CD4-positive, alpha-beta memory T cell (primary cell): ENCODE measurements at regions of chr14 and their contacts with region 1.

Region 1: GRCh38 chr14:101707068-101707842 is 54.3 kb upstream of the PPP2R5C start:
- DNase-seq: peak; percentile 70 to 83 (median 82)
- H3K4me3 ChIP-seq: peak overlapping the region; percentile 21 to 52
- H3K4me3 Mint-ChIP-seq: peak overlapping the region; percentile 34 to 79 (median 74)
- H3K27ac ChIP-seq: peak overlapping the region; percentile 57
- H3K27ac Mint-ChIP-seq: peak overlapping the region; percentile 59 to 94 (median 90)
- H3K4me1 ChIP-seq: peaks cover 52% of the 10 kb centered on the region
- H3K4me1 Mint-ChIP-seq: peaks cover 23 to 54% (median 41%) of the 10 kb centered on the region in 4 donors
- H3K27me3 ChIP-seq: no peaks in the 10 kb centered on the region
- H3K27me3 Mint-ChIP-seq: no peaks in the 10 kb centered on the region

Region 2: GRCh38 chr14:101731187-101732080 is 24.2 kb after region 1 on chr14:
- CTCF ChIA-PET with region 1: interaction called, 23 read pairs
- POLR2A ChIA-PET with region 1: interaction called, 59 read pairs
- intact Hi-C with region 1: loop called (anchors 1 kb)
- DNase-seq: peak; percentile 83 to 96 (median 83)
- H3K4me3 ChIP-seq: peak overlapping the region; percentile 31 to 58
- H3K4me3 Mint-ChIP-seq: peak overlapping the region; percentile 68 to 86 (median 82)
- H3K27ac ChIP-seq: peak overlapping the region; percentile 75
- H3K27ac Mint-ChIP-seq: peak overlapping the region; percentile 85 to 100 (median 99)
- H3K4me1 ChIP-seq: peaks cover 35% of the 10 kb centered on the region
- H3K4me1 Mint-ChIP-seq: peaks cover 29 to 52% (median 42%) of the 10 kb centered on the region in 4 donors
- H3K27me3 ChIP-seq: no peaks in the 10 kb centered on the region
- H3K27me3 Mint-ChIP-seq: no peaks in the 10 kb centered on the region

Region 3: GRCh38 chr14:101767618-101768362 is 60.5 kb after region 1 on chr14:
- CTCF ChIA-PET with region 1: interaction called, 110 read pairs
- POLR2A ChIA-PET with region 1: interaction called, 68 read pairs
- intact Hi-C with region 1: loop called (anchors 1 kb)
- DNase-seq: no peak
- H3K4me3 ChIP-seq: no peak overlapping the region
- H3K4me3 Mint-ChIP-seq: no peak overlapping the region
- H3K27ac ChIP-seq: no peak overlapping the region
- H3K27ac Mint-ChIP-seq: no peak overlapping the region
- H3K4me1 ChIP-seq: peaks cover 45% of the 10 kb centered on the region
- H3K4me1 Mint-ChIP-seq: peaks cover 29 to 37% (median 34%) of the 10 kb centered on the region in 4 donors
- H3K27me3 ChIP-seq: no peaks in the 10 kb centered on the region
- H3K27me3 Mint-ChIP-seq: no peaks in the 10 kb centered on the region

Region 4: DNA sequence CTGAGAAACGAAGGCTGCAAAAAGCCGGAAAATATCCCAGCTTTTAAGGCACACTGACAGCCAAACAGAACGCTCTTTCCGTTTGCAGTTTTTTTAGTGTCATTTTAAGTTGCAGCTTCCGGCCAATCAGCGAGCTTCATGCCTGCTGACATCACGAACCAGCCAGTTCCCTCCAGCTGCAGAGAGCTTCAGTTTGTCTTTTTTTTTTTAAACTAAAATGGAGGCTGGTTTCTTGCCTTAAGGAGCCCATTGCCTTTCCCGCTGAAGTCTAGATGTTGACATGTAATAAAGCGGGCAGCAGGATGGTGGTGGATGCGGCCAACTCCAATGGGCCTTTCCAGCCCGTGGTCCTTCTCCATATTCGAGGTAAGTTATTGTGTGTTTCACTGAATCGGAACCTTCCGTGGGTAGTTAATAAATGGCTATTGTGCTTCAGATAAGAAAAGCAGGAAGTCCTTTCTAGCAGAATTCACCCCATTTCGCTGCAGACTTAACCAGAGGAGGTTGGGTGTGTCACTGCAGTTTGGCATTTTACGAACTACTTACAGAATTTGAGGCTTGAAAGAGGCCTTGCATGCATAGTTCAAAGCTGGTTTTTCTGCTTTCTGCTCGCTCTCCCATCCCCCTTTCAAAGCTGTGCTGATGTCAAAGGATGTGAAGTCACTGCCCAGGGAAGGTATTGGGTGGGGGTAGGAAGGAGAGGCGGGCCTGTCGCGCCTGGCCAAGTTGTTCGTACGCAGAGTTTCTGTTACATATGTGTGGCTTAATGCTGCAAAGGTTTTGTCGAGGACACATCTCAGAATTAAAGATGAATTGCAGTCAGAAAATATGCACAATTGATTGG is 102.6 kb after region 1 on chr14:
- CTCF ChIA-PET with region 1: interaction called, 28 read pairs
- POLR2A ChIA-PET with region 1: interaction called, 30 read pairs
- intact Hi-C with region 1: loop called (anchors 5 kb)
- DNase-seq: peak; percentile 91 to 97 (median 95)
- H3K4me3 ChIP-seq: peak overlapping the region; percentile 85 to 97
- H3K4me3 Mint-ChIP-seq: peak overlapping the region; percentile 90 to 97 (median 95)
- H3K27ac ChIP-seq: peak overlapping the region; percentile 98
- H3K27ac Mint-ChIP-seq: peak overlapping the region; percentile 97 to 100 (median 99)
- H3K4me1 ChIP-seq: peaks cover 46% of the 10 kb centered on the region
- H3K4me1 Mint-ChIP-seq: peaks cover 31 to 62% (median 46%) of the 10 kb centered on the region in 4 donors
- H3K27me3 ChIP-seq: no peaks in the 10 kb centered on the region
- H3K27me3 Mint-ChIP-seq: no peaks in the 10 kb centered on the region

Region 5: GRCh38 chr14:101843665-101844064 is 136.4 kb after region 1 on chr14:
- CTCF ChIA-PET with region 1: interaction called, 46 read pairs
- POLR2A ChIA-PET with region 1: interaction called, 20 read pairs
- intact Hi-C with region 1: loop called (anchors 1 kb)
- DNase-seq: peak; percentile 65 to 83 (median 67)
- H3K4me3 ChIP-seq: no peak overlapping the region
- H3K4me3 Mint-ChIP-seq: peak overlapping the region in 7 of 8 donors; percentile 23 to 81 (median 50)
- H3K27ac ChIP-seq: peak overlapping the region; percentile 7
- H3K27ac Mint-ChIP-seq: peak overlapping the region; percentile 76 to 95 (median 92)
- H3K4me1 ChIP-seq: peaks cover 96% of the 10 kb centered on the region
- H3K4me1 Mint-ChIP-seq: peaks cover 72 to 98% (median 86%) of the 10 kb centered on the region in 4 donors
- H3K27me3 ChIP-seq: no peaks in the 10 kb centered on the region
- H3K27me3 Mint-ChIP-seq: no peaks in the 10 kb centered on the region

Region 6: DNA sequence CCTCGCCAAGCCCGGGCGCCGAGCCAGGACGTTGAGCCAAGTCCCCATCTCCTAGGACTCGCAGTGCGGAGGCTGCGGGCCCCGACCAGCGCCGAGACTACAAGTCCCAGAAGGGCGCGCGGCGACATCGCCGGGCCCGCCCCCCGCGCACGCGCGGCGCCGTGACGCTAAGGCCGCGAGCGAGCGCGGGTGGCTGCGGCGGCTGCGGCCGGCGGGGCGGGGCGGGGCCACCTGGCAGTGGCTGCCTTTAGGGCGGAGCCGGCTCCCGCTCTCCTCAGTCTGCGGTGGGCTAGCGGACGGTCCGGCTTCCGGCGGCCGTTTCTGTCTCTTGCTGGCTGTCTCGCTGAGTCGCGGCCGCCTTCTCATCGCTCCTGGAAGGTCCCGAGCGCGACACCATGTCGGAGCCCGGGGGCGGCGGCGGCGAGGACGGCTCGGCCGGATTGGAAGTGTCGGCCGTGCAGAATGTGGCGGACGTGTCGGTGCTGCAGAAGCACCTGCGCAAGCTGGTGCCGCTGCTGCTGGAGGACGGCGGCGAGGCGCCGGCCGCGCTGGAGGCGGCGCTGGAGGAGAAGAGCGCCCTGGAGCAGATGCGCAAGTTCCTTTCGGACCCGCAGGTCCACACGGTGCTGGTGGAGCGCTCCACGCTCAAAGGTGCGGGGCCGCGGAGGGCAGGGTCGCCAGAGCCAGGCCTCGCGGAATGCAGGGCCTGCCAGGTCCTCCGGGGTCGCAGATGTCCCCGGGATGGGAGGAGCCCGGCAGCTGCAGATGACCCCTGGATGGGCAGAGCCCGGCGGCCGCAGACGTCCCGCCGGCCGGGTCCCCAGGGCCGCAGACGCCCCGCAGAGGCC is 257.3 kb after region 1 on chr14 and contains the start of gene DYNC1H1:
- CTCF ChIA-PET with region 1: interaction called, 21 read pairs
- POLR2A ChIA-PET with region 1: interaction called, 8 read pairs
- intact Hi-C with region 1: loop called (anchors 1 kb)
- DNase-seq: peak; percentile 85 to 92 (median 89)
- H3K4me3 ChIP-seq: peak within 1 kb of the TSS; percentile 45 to 82
- H3K4me3 Mint-ChIP-seq: peak within 1 kb of the TSS; percentile 89 to 92 (median 91)
- H3K27ac ChIP-seq: peak within 1 kb of the TSS; percentile 79
- H3K27ac Mint-ChIP-seq: peak within 1 kb of the TSS; percentile 92 to 96 (median 93)
- H3K4me1 ChIP-seq: peaks cover 46% of the 10 kb centered on the region
- H3K4me1 Mint-ChIP-seq: peaks cover 27 to 61% (median 43%) of the 10 kb centered on the region in 4 donors
- H3K27me3 ChIP-seq: no peaks in the 10 kb centered on the region
- H3K27me3 Mint-ChIP-seq: no peaks in the 10 kb centered on the region
- total RNA-seq, gene DYNC1H1: 314 to 318 TPM

Region 7: DNA sequence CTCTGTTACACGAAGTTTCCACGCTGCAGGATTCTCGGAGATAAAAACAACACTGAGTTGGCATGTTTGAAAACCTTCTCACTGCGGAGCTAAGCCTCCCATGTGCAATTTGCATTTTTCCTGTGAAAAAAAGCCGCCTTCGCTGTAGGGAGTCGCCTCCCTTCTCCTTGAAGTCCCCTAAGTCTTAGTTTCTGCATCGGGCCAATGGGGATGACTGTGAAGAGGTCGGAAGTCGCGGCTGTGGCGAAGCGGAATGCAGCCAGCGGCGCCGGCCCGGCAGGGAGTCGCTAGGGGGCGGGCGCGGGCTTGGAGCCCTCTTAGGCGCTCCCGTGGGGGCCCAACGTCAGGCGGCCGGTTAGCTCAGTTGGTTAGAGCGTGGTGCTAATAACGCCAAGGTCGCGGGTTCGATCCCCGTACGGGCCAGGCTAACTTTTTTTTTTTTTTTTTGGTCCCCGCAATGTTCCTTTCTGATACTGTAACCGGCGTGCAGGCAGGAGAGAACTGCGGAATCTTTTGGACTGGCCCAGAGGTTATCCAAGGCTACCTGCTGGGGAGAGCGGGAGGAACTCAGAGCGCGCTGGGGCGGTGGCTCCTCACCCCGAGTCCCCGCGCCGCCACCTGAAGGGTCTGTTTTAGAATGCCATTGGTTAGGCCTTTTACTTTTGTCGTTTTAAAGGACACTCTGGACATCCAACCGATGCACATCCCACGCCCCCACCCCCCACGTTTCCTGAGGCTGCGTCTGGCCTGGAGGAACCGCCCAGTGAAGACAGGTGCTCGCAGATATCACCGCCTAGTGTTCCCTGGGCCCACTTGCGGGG is 609.7 kb after region 1 on chr14:
- CTCF ChIA-PET with region 1: no interaction called
- POLR2A ChIA-PET with region 1: no interaction called
- intact Hi-C with region 1: loop called (anchors 2 kb)
- DNase-seq: peak; percentile 90 to 98 (median 95)
- H3K4me3 ChIP-seq: peak overlapping the region; percentile 59 to 76
- H3K4me3 Mint-ChIP-seq: peak overlapping the region; percentile 92 to 99 (median 96)
- H3K27ac ChIP-seq: peak overlapping the region; percentile 52
- H3K27ac Mint-ChIP-seq: peak overlapping the region; percentile 75 to 100 (median 96)
- H3K4me1 ChIP-seq: peaks cover 57% of the 10 kb centered on the region
- H3K4me1 Mint-ChIP-seq: peaks cover 30 to 77% (median 49%) of the 10 kb centered on the region in 4 donors
- H3K27me3 ChIP-seq: no peaks in the 10 kb centered on the region
- H3K27me3 Mint-ChIP-seq: peaks cover 4 to 9% of the 10 kb centered on the region in 2 donors